HEK293 (cell line): ENCODE measurements at regions of chr20 and their contacts with region 1.

Region 1: DNA sequence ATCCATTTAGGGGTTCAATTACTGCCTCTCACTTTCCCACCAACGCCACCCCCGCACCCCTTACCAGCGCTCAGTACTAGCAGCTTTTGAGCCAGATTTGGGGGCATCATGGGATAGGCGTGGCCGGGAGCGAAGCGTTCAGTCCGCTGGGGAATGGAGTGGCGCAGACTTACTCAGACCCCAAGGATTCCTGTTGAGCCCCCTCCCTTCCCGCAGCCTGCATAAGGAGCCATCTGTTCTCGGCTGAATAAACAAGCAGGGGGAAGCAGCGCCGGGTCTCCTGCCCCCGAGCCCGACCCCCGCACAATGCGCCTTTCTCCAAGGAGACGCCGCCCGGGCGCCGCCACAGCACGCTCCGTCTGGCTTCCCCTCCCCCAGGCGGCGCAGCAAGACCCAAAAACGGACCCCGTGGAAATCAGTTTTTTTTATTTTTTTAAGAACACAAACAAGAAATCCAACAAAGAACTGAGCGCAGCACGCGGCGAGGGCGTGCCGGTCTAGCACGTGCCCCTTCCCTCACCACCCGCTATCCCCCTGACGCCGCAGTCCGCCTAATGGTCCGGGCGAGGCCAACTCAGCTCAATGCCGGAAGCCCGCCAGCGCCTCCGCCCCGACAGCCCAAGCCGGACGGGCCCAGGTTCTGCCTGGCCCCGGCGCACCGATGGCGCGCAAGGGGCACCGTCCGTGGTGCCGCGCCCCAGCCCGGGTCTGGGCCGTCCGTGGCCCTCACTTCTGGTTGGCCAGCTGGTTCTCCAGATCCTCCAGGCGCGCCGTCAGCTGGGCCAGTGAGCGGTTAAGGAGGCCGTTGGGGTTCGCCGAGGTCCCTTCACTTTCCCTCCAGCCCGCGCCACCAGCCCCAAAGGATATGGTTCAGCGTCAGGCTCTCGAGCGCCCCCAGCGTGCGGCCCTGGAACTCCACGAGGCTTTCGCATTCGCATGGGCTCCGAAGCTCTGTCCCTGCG is 13.3 kb upstream of the RBPJL start:
- H3K4me3 ChIP-seq: peak overlapping the region; percentile 46
- H3K27ac ChIP-seq: no peak overlapping the region
- H3K4me1 ChIP-seq: no peaks in the 10 kb centered on the region
- CTCF ChIP-seq: peak; percentile 45; the same call in 1 of the 2 replicates

Region 2: GRCh38 chr20:45011108-45011526 is 282.2 kb before region 1 on chr20:
- CTCF ChIA-PET with region 1: interaction called, 36 read pairs
- POLR2A ChIA-PET with region 1: no interaction called
- H3K4me3 ChIP-seq: no peak overlapping the region
- H3K27ac ChIP-seq: no peak overlapping the region
- H3K4me1 ChIP-seq: peaks cover 16% of the 10 kb centered on the region
- CTCF ChIP-seq: peak; percentile 56; the same call in 1 of the 2 replicates

Region 3: GRCh38 chr20:45044084-45044573 is 249.2 kb before region 1 on chr20:
- CTCF ChIA-PET with region 1: interaction called, 58 read pairs
- POLR2A ChIA-PET with region 1: no interaction called
- H3K4me3 ChIP-seq: no peak overlapping the region
- H3K27ac ChIP-seq: no peak overlapping the region
- H3K4me1 ChIP-seq: peaks cover 6% of the 10 kb centered on the region; the same call in 1 of the 2 replicates
- CTCF ChIP-seq: peak; percentile 61

Region 4: DNA sequence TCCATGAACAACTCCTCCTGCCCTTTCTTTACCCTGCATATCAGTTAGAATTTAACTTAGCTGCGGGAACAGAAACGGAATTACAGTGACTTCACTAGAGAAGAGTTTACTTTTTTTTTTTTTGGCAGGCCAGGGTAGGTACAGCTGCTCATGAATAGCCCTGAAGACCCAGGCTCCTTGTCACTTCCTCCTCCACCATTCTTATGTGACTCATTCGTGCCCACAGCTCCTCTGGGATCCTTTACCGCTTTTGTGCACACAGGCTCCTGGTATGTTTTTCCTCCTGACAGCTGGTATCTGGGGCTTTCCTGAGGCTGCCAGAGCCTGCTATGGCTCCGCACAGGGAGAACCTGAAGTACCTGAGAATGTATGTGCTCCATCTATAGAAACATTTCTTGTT is 188.5 kb before region 1 on chr20:
- CTCF ChIA-PET with region 1: interaction called, 14 read pairs
- POLR2A ChIA-PET with region 1: no interaction called
- H3K4me3 ChIP-seq: no peak overlapping the region
- H3K27ac ChIP-seq: no peak overlapping the region
- H3K4me1 ChIP-seq: no peaks in the 10 kb centered on the region
- CTCF ChIP-seq: no peak

Region 5: DNA sequence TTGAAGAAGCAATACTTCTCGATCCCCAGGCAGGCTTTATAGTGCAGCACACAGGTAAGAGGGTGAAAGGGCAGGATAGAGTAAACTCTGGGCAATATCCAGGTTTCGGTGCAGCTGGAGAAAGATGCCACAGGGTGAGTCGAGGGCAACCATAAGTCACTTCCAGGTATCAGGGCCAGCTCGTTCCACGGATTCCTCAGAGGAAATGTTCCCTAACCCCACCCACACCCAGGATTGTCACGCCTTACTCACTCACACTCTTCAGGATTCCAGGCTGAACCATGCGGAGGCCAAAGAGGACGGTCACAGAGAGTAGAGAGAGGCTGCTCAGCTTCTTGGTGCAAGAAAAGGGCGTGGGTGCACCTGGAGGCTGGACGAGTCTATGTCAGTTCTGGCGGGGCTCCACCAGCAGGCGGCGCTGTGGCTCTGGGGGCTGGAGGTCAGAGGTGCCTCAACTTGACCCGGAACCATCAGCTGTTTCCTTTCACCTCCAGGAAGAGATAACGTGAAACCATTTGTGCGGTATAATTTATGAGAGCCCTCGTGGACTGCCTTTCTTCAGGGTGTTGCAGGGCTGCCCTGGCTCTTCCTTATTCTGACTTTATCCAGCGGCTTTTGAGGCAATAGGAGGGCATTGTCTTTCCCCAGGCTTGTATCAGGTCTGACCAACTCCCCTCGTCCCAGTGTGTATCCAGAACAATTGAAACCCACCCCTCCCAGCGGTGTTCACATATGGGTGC is 154.6 kb before region 1 on chr20:
- CTCF ChIA-PET with region 1: interaction called, 55 read pairs
- POLR2A ChIA-PET with region 1: no interaction called
- H3K4me3 ChIP-seq: no peak overlapping the region
- H3K27ac ChIP-seq: no peak overlapping the region
- H3K4me1 ChIP-seq: no peaks in the 10 kb centered on the region
- CTCF ChIP-seq: peak; percentile 39; the same call in 1 of the 2 replicates

Region 6: GRCh38 chr20:45268531-45268930 is 24.8 kb before region 1 on chr20:
- CTCF ChIA-PET with region 1: interaction called, 12 read pairs
- POLR2A ChIA-PET with region 1: no interaction called
- H3K4me3 ChIP-seq: no peak overlapping the region
- H3K27ac ChIP-seq: no peak overlapping the region
- H3K4me1 ChIP-seq: no peaks in the 10 kb centered on the region
- CTCF ChIP-seq: no peak

Region 7: DNA sequence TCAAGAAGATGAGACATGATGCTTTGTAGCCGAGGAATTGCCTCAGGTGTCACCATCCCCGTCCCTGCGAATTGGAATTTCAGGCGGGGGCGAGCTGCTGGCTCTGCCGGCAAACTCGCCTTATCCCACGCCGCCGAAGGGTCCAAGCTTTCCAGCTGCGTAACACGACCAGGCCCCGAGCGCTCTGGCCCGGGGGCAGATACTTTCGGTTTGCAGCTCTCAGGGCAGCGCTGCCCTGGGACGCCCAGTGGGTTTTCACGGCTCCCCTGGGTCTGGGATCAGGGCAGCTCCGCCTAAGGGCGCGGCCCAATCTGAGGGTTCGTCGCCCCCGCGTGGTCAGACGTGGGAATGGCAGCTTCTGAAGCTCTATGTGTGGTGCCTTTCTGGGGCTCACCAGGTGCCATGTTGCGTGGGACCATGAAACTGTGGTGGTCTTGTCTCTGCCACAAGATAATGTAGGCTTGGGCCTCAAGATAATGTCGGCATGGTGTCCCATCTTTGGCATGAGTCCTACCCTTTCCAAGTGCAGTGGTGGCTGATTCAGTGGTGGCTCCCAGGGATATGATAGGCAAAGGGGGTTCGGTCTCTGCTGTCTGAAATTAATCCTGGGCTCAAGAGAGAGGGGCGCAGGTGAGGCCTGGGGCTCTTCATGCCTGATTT is 143.5 kb after region 1 on chr20:
- CTCF ChIA-PET with region 1: interaction called, 11 read pairs
- POLR2A ChIA-PET with region 1: interaction called, 3 read pairs
- H3K4me3 ChIP-seq: peak overlapping the region; percentile 59
- H3K27ac ChIP-seq: no peak overlapping the region
- H3K4me1 ChIP-seq: 0 out of 2 replicates have a peak, but pooled peaks cover 4% of the 10 kb centered on the region
- CTCF ChIP-seq: peak; percentile 97